ENCODE measurements at regions of chr4 and their contacts with region 1.

Region 1: GRCh38 chr4:139316733-139317132 is 14.5 kb upstream of the NDUFC1 start:
- DNase-seq: no peak
- H3K4me3 Mint-ChIP-seq: peak overlapping the region; percentile 9
- H3K27ac Mint-ChIP-seq: peak overlapping the region; percentile 11
- H3K4me1 Mint-ChIP-seq: peaks cover 57% of the 10 kb centered on the region
- H3K27me3 Mint-ChIP-seq: no peaks in the 10 kb centered on the region

Region 2: GRCh38 chr4:139331185-139331584 is 14.5 kb after region 1 on chr4:
- intact Hi-C with region 1: loop called (anchors 2 kb)
- DNase-seq: no peak
- H3K4me3 Mint-ChIP-seq: no peak overlapping the region
- H3K27ac Mint-ChIP-seq: no peak overlapping the region
- H3K4me1 Mint-ChIP-seq: peaks cover 25% of the 10 kb centered on the region
- H3K27me3 Mint-ChIP-seq: no peaks in the 10 kb centered on the region

Region 3: DNA sequence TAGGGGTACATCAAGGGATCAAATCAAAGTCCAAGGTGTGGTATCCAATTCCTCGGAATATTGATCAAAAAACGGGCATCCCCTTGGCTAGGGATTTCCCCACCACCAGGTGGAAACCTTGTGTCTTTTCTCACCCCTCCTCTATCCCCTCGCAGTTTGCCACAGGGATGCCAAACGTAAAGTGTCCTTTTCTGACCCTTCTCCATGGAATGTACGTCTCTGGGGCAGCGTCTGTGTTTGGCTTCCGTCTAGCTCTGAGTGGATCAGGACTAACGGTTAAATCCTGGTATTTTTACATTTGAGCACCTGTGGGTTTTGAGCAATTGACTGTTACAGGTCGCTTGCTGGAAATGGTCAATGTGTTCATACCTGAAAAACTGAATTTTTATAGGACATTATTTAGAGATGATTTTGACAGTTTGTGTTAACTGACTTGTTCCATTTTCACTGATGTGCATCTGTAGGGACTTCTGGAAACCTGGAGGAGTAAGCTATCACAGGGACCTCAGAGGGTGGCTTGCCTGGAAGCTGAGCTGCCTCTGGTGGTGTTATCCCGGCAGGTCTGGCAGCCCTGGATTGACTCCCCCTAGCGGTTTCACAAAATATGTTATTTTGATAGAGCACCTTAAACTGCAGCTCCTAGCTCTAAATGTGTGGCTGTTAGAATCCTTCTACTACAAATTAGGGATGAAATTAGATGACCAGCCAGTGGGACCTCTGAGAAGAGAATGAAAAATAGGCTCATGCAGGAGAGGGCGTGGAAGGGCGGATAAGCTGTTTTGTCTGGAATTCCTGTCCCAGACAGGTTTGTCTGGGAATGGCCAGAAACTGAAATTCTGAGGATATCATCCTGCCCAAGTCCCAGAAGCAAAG is 340.1 kb after region 1 on chr4:
- intact Hi-C with region 1: no loop called
- DNase-seq: peak; percentile 42
- H3K4me3 Mint-ChIP-seq: peak overlapping the region; percentile 73
- H3K27ac Mint-ChIP-seq: peak overlapping the region; percentile 94
- H3K4me1 Mint-ChIP-seq: peaks cover 45% of the 10 kb centered on the region
- H3K27me3 Mint-ChIP-seq: no peaks in the 10 kb centered on the region

Measured in activated T-helper 1 cell treated with anti-CD3 and anti-CD28 coated beads, Interleukin-12 subunit alpha, Interleukin-12 subunit beta, Interleukin-2, Interleukin-4 antibody, amounts not matched to agents 30 ng/mL and 10 ng/mL and 1 ng/mL, durations not matched to agents 14 hours and 24 hours and 36 hours (primary cell).